ENCODE measurements at regions of chr15 and their contacts with region 1.

Region 1: DNA sequence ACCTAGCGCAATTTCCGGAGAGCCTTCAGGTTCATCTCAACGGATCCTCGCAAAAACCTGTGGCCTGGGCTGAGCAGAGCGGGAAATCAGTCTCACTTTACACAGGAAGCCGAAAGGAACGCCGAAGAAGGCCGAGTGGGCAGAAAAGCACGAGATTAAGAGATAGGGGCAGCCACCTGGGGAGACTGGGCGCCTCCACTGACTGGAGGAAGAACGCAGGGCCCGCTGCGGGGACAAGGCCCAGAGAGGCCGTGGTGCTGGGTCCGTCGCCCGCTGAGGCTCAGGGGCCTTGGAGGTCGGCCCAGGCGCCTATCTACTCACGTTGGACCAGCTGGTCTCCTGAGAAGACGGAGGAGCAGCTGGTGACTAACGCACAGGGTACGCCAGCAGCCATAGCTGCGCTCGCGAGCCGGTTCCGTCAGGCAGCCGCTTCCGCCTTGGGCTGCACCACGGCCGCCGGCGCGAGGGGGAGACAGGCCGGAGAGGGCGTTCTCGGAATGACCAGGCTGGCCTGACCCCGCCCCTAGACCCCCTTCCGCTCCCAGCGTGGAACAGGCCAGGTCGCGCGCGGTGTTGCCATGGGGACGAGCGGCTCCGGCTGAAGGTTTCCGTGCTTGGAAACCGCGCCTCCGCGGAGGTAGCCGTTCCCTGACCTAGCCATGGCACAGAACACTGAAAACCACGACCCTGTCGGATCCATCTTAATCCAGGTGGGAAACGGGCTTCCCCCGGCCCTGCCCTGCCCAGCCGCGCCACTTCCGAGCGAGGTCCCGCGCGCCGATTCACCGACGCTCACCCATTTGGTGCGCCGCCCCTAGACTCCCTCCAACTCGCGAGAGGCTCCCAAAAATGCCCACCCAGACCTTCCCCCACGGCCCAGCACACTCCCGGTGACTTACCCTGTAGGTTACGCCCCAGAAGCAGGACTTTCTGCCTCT is at the starts of genes AAGAB and IQCH:
- DNase-seq: peak; percentile 81 to 98 (median 91)
- ATAC-seq: peak; percentile 99
- H3K4me3 ChIP-seq: peak within 1 kb of the TSS; percentile 69
- H3K4me3 Mint-ChIP-seq: peak within 1 kb of the TSS; percentile 87 to 100 (median 96)
- H3K27ac ChIP-seq: peak within 1 kb of the TSS; percentile 84
- H3K27ac Mint-ChIP-seq: peak within 1 kb of the TSS; percentile 86 to 99 (median 95)
- H3K4me1 ChIP-seq: peaks cover 4 to 13% of the 10 kb centered on the region in 2 donors
- H3K4me1 Mint-ChIP-seq: peaks cover 25 to 52% (median 41%) of the 10 kb centered on the region in 7 donors
- H3K27me3 ChIP-seq: no peaks in the 10 kb centered on the region
- H3K27me3 Mint-ChIP-seq: peaks cover 0 to 25% (median 0%) of the 10 kb centered on the region in 5 donors
- total RNA-seq, gene AAGAB: 19.5 to 44.9 (median 22.3) TPM
- total RNA-seq, gene IQCH: 0.22 to 1.9 (median 0.84) TPM

Region 2: GRCh38 chr15:66946578-66947164 is 307.8 kb before region 1 on chr15:
- CTCF ChIA-PET with region 1: no interaction called
- POLR2A ChIA-PET with region 1: no interaction called
- intact Hi-C with region 1: loop called in 1 of 2 experiments (anchors 5 kb)
- DNase-seq: peak; percentile 50 to 78 (median 68)
- ATAC-seq: peak; percentile 86
- H3K4me3 ChIP-seq: no peak overlapping the region
- H3K4me3 Mint-ChIP-seq: peak overlapping the region in 2 of 10 donors; percentile 17
- H3K27ac ChIP-seq: no peak overlapping the region
- H3K27ac Mint-ChIP-seq: no peak overlapping the region
- H3K4me1 ChIP-seq: no peaks in the 10 kb centered on the region
- H3K4me1 Mint-ChIP-seq: peaks cover 0 to 26% (median 4%) of the 10 kb centered on the region in 7 donors
- H3K27me3 ChIP-seq: no peaks in the 10 kb centered on the region
- H3K27me3 Mint-ChIP-seq: peaks cover 0 to 9% (median 0%) of the 10 kb centered on the region in 5 donors

Region 3: DNA sequence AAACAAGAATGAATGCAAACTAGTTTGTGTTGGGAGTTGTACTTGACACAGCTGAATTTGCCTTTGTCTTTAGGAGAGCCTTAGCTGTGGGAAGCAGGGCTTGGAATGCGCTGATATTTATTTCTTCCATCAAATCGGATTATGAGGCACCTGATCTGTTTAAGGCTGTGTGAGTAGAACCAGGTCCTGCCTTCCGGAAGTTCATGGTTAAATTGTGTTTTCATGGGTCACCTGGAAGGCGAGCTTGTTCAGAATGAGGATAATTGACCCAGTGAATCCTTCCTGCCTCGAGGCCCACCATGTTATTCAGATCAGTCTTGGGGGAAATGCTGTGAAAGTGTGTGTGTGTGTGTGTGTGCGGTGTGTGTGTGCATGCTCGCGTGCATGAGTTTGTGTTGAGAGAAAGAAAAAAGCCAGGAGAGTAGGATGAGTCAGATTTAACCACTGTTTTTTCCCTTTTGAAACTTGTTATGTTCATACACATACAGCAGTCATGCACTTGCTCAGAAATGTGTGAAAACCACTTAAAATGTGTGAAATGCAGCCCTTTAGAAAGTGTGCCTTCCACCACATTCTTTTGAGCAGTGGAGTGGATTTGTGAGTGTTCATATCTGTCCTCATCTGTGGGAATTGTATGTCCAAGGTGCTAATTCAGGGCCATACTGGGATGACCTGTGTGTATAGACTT is 152.5 kb before region 1 on chr15:
- CTCF ChIA-PET with region 1: no interaction called
- POLR2A ChIA-PET with region 1: no interaction called
- intact Hi-C with region 1: loop called in 1 of 2 experiments (anchors 2 kb)
- DNase-seq: peak in 1 of 9 donors; percentile 51
- ATAC-seq: peak; percentile 62
- H3K4me3 ChIP-seq: peak overlapping the region; percentile 15
- H3K4me3 Mint-ChIP-seq: no peak overlapping the region
- H3K27ac ChIP-seq: peak overlapping the region; percentile 61
- H3K27ac Mint-ChIP-seq: no peak overlapping the region
- H3K4me1 ChIP-seq: peaks cover 92 to 95% of the 10 kb centered on the region in 2 donors
- H3K4me1 Mint-ChIP-seq: peaks cover 26 to 64% (median 27%) of the 10 kb centered on the region in 7 donors
- H3K27me3 ChIP-seq: no peaks in the 10 kb centered on the region
- H3K27me3 Mint-ChIP-seq: no peaks in the 10 kb centered on the region

Region 4: GRCh38 chr15:67199881-67200763 is 54.4 kb before region 1 on chr15:
- CTCF ChIA-PET with region 1: no interaction called
- POLR2A ChIA-PET with region 1: no interaction called
- intact Hi-C with region 1: loop called in 1 of 2 experiments (anchors 5 kb)
- DNase-seq: no peak
- ATAC-seq: no peak
- H3K4me3 ChIP-seq: no peak overlapping the region
- H3K4me3 Mint-ChIP-seq: no peak overlapping the region
- H3K27ac ChIP-seq: no peak overlapping the region
- H3K27ac Mint-ChIP-seq: peak overlapping the region in 4 of 9 donors; percentile 6 to 48 (median 10)
- H3K4me1 ChIP-seq: peaks cover 0 to 4% of the 10 kb centered on the region in 2 donors
- H3K4me1 Mint-ChIP-seq: peaks cover 5 to 31% (median 13%) of the 10 kb centered on the region in 7 donors
- H3K27me3 ChIP-seq: no peaks in the 10 kb centered on the region
- H3K27me3 Mint-ChIP-seq: no peaks in the 10 kb centered on the region

Region 5: DNA sequence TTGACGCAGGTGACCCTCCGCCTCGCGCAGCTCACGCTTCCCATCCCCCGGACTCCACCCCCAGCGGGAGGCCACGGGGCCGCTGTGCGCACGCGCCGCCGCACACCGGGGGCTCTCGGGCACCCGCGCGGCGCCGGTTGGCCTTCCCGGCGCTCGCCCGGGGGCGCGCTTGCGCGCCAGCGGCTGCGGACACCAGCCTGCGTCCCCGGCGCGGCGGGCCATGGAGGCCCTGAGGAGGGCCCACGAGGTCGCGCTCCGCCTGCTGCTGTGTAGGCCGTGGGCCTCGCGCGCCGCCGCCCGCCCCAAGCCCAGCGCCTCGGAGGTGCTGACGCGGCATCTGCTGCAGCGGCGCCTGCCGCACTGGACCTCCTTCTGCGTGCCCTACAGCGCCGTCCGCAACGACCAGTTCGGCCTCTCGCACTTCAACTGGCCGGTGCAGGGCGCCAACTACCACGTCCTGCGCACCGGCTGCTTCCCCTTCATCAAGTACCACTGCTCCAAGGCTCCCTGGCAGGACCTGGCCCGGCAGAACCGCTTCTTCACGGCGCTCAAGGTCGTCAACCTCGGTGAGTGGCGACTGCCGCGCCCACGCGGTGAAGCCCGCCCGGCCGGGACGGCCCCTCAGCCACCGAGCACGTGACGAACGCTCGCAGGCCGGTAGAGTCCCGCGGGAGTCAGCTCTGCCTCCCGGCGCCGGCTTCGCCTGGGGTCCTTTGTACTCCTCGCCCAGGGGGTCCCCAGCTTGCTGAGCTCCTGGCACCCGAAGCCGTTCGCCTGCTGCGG is 266.7 kb after region 1 on chr15 and contains the start of gene C15orf61:
- CTCF ChIA-PET with region 1: no interaction called
- POLR2A ChIA-PET with region 1: no interaction called
- intact Hi-C with region 1: loop called in 1 of 2 experiments (anchors 2 kb)
- DNase-seq: peak; percentile 78 to 92 (median 82)
- ATAC-seq: peak; percentile 90
- H3K4me3 ChIP-seq: peak within 1 kb of the TSS; percentile 87
- H3K4me3 Mint-ChIP-seq: peak within 1 kb of the TSS; percentile 85 to 98 (median 95)
- H3K27ac ChIP-seq: peak within 1 kb of the TSS; percentile 85
- H3K27ac Mint-ChIP-seq: peak within 1 kb of the TSS; percentile 88 to 96 (median 94)
- H3K4me1 ChIP-seq: peaks cover 16 to 28% of the 10 kb centered on the region in 2 donors
- H3K4me1 Mint-ChIP-seq: peaks cover 20 to 40% (median 34%) of the 10 kb centered on the region in 7 donors
- H3K27me3 ChIP-seq: no peaks in the 10 kb centered on the region
- H3K27me3 Mint-ChIP-seq: no peaks in the 10 kb centered on the region
- total RNA-seq, gene C15orf61: 4.3 to 11.0 (median 8.2) TPM

Region 6: DNA sequence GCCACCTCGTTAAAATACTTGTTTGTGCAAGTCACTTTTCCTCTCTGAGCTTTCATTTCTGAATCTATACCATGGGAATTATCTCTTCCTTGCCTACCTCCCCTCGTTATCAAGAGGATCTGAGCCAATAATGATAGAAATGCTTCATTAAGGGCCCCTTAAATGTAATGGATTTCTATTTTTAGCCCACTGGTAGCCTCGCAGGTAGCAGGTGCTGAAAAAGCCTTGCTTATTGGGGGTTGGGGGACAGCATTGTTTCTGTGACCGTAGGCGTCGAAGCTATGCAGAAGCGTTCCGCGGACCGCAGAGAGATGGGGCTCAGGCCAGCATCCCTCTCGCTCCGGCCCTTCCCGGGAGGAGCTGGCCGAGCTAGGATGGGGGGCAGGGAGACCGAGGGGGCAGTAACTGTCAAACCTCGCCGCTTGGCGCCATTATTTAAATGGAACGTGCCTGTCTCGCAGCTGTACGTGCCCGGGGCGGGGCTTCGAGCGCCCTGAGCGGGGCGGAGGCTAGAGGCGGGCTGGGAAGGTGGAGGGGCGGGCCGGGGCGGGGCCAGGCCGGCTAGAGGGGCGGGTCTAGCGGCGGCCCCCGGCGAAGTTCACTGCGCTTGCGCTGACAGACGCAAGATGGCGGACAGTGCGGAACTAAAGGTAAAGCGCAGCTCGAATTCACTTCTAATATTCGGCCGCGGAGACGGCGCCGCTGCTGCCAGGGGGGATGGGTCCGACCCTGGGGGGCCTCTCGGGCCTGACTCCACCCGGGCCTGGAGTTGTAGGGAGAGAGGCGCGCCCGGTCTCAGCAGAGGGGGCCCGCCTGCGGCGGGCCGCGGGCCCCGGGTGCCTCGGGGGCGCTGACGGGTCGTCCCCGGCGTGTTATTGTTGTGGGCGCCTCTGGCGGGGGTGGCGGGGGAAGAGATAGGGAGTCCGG is 799.5 kb after region 1 on chr15 and contains the start of gene PIAS1:
- CTCF ChIA-PET with region 1: no interaction called
- POLR2A ChIA-PET with region 1: no interaction called
- intact Hi-C with region 1: loop called in 1 of 2 experiments (anchors 2 kb)
- DNase-seq: peak; percentile 87 to 94 (median 92)
- ATAC-seq: peak; percentile 96
- H3K4me3 ChIP-seq: peak within 1 kb of the TSS; percentile 87
- H3K4me3 Mint-ChIP-seq: peak within 1 kb of the TSS; percentile 89 to 97 (median 95)
- H3K27ac ChIP-seq: peak within 1 kb of the TSS; percentile 93
- H3K27ac Mint-ChIP-seq: peak within 1 kb of the TSS; percentile 84 to 97 (median 92)
- H3K4me1 ChIP-seq: peaks cover 21 to 35% of the 10 kb centered on the region in 2 donors
- H3K4me1 Mint-ChIP-seq: peaks cover 28 to 46% (median 39%) of the 10 kb centered on the region in 7 donors
- H3K27me3 ChIP-seq: no peaks in the 10 kb centered on the region
- H3K27me3 Mint-ChIP-seq: peaks cover 0 to 15% (median 0%) of the 10 kb centered on the region in 5 donors
- total RNA-seq, gene PIAS1: 41.3 to 103 (median 90.9) TPM